ENCODE measurements at regions of chr1 and their contacts with region 1.

Region 1: GRCh38 chr1:77978969-77979876 is at the start of gene FUBP1:
- DNase-seq: peak; percentile 84 to 98 (median 92)

Region 2: GRCh38 chr1:77899647-77900320 is 79.4 kb before region 1 on chr1:
- intact Hi-C with region 1: no loop called
- DNase-seq: no peak

Region 3: GRCh38 chr1:78004719-78005447 is 25.7 kb after region 1 on chr1 and contains the start of gene DNAJB4:
- intact Hi-C with region 1: loop called (anchors 1 kb)
- DNase-seq: peak in 4 of 10 donors; percentile 39 to 53 (median 46)